IMR-90 (cell line): ENCODE measurements at regions of chr9 and their contacts with region 1.

Region 1: GRCh38 chr9:104093647-104094533 is at the start of gene SMC2:
- DNase-seq: peak; percentile 84
- ATAC-seq: peak; percentile 97
- H3K4me3 ChIP-seq: peak within 1 kb of the TSS; percentile 92
- H3K27ac ChIP-seq: peak within 1 kb of the TSS; percentile 93
- H3K4me1 ChIP-seq: peaks cover 3% of the 10 kb centered on the region
- H3K27me3 ChIP-seq: no peaks in the 10 kb centered on the region
- CTCF ChIP-seq: no peak
- POLR2A ChIP-seq: peak; percentile 81
- RAD21 ChIP-seq: no peak
- total RNA-seq, gene SMC2: 12.4 and 21.4 TPM in 2 replicates

Region 2: GRCh38 chr9:104075801-104076753 is 17.8 kb before region 1 on chr9:
- CTCF ChIA-PET with region 1: interaction called, 9 read pairs
- POLR2A ChIA-PET with region 1: no interaction called
- dilution Hi-C with region 1: no loop called
- in situ Hi-C with region 1: no loop called
- intact Hi-C with region 1: loop called (anchors 1 kb)
- DNase-seq: peak; percentile 66
- ATAC-seq: peak; percentile 25
- H3K4me3 ChIP-seq: no peak overlapping the region
- H3K27ac ChIP-seq: peak overlapping the region; percentile 67; the same call in 1 of the 2 replicates
- H3K4me1 ChIP-seq: peaks cover 10% of the 10 kb centered on the region
- H3K27me3 ChIP-seq: no peaks in the 10 kb centered on the region
- CTCF ChIP-seq: no peak
- POLR2A ChIP-seq: no peak
- RAD21 ChIP-seq: no peak

Region 3: GRCh38 chr9:104747558-104748358 is 653.9 kb after region 1 on chr9 and contains the start of gene NIPSNAP3A:
- CTCF ChIA-PET with region 1: no interaction called
- POLR2A ChIA-PET with region 1: no interaction called
- dilution Hi-C with region 1: no loop called
- in situ Hi-C with region 1: no loop called
- intact Hi-C with region 1: loop called (anchors 5 kb)
- DNase-seq: peak; percentile 49
- ATAC-seq: peak; percentile 96
- H3K4me3 ChIP-seq: peak within 1 kb of the TSS; percentile 80
- H3K27ac ChIP-seq: peak within 1 kb of the TSS; percentile 83
- H3K4me1 ChIP-seq: peaks cover 2% of the 10 kb centered on the region; the same call in 1 of the 2 replicates
- H3K27me3 ChIP-seq: no peaks in the 10 kb centered on the region
- CTCF ChIP-seq: no peak
- POLR2A ChIP-seq: peak; percentile 42; the same call in 1 of the 2 replicates
- RAD21 ChIP-seq: no peak
- total RNA-seq, gene NIPSNAP3A: 32.1 and 40.0 TPM in 2 replicates